Calu3 (cell line): ENCODE measurements at regions of chr6 and their contacts with region 1.

Region 1: GRCh38 chr6:90859612-90860011 is 272.7 kb upstream of the MAP3K7 start:
- DNase-seq: no peak
- H3K4me3 Mint-ChIP-seq: no peak overlapping the region
- H3K27ac Mint-ChIP-seq: no peak overlapping the region
- H3K4me1 Mint-ChIP-seq: no peaks in the 10 kb centered on the region
- H3K27me3 Mint-ChIP-seq: no peaks in the 10 kb centered on the region
- CTCF ChIP-seq: no peak

Region 2: DNA sequence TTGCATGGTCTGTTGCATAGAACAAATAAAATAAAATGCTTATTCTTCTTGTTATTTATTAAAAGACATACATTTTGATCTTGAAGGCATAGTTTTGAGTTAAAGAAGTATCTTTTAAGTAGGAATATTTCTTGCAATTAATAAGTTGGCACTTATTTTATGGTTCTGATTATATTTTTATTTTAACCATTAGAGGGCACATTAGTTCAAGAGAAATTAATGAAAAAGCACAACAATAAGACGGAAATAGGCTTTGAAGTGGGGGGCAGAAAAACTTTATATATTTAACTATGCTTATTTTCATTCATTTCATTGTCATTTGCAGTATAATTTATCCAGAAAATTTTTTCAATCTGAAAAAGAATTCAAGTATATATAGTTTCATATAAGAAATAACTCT is 228.6 kb before region 1 on chr6:
- CTCF ChIA-PET with region 1: no interaction called
- intact Hi-C with region 1: loop called (anchors 10 kb)
- DNase-seq: no peak
- H3K4me3 Mint-ChIP-seq: no peak overlapping the region
- H3K27ac Mint-ChIP-seq: no peak overlapping the region
- H3K4me1 Mint-ChIP-seq: no peaks in the 10 kb centered on the region
- H3K27me3 Mint-ChIP-seq: peaks cover 7% of the 10 kb centered on the region
- CTCF ChIP-seq: no peak

Region 3: DNA sequence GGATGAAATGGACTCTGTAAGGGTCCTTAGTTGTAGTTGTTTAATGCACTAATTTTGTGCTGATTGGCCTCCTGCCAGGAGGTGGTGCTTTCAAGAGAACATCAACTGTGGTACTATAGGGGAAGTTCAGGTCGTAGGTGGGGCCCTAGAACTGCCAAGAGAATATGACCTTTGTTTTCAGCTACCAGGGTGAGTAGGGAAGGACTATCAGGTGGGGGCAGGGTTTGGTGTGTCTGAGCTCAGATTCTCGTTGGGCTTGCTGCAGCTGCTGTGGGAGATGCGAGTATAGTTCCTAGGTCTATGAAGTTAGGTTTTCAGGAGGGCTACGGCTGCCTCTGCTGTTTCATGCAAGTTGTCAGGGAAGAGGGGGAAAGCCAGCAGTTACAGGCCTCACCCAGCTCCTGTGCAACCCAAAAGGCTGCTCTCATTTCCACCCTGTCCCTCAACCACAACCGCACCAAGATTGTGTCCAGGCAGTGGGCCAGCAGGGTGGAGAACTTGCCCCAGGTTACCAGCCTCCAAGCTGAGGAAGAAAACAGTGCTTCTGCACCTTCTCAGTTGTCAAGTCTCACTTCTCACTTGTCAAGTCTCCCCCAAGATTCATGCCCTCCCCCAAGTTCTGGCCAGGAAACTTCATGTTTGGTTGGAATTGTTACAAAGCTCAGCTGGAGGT is 353.8 kb after region 1 on chr6:
- CTCF ChIA-PET with region 1: no interaction called
- intact Hi-C with region 1: no loop called
- DNase-seq: no peak
- H3K4me3 Mint-ChIP-seq: no peak overlapping the region
- H3K27ac Mint-ChIP-seq: no peak overlapping the region
- H3K4me1 Mint-ChIP-seq: no peaks in the 10 kb centered on the region
- H3K27me3 Mint-ChIP-seq: no peaks in the 10 kb centered on the region
- CTCF ChIP-seq: no peak